Heart left ventricle (tissue), 16 donors: ENCODE measurements at regions of chr21 and their contacts with region 1.

Region 1: GRCh38 chr21:43810505-43811261 is 21.3 kb downstream of the RRP1 start:
- DNase-seq: peak; percentile 83 to 93 (median 86)
- ATAC-seq: peak; percentile 68 to 88 (median 84)
- H3K4me3 ChIP-seq: peak overlapping the region in 3 of 12 donors; percentile 3 to 52 (median 15)
- H3K27ac ChIP-seq: no peak overlapping the region
- H3K4me1 ChIP-seq: peaks cover 0 to 25% (median 8%) of the 10 kb centered on the region in 12 donors
- H3K27me3 ChIP-seq: no peaks in the 10 kb centered on the region
- CTCF ChIP-seq: peak; percentile 88 to 97 (median 92)
- POLR2A ChIP-seq: no peak

Region 2: DNA sequence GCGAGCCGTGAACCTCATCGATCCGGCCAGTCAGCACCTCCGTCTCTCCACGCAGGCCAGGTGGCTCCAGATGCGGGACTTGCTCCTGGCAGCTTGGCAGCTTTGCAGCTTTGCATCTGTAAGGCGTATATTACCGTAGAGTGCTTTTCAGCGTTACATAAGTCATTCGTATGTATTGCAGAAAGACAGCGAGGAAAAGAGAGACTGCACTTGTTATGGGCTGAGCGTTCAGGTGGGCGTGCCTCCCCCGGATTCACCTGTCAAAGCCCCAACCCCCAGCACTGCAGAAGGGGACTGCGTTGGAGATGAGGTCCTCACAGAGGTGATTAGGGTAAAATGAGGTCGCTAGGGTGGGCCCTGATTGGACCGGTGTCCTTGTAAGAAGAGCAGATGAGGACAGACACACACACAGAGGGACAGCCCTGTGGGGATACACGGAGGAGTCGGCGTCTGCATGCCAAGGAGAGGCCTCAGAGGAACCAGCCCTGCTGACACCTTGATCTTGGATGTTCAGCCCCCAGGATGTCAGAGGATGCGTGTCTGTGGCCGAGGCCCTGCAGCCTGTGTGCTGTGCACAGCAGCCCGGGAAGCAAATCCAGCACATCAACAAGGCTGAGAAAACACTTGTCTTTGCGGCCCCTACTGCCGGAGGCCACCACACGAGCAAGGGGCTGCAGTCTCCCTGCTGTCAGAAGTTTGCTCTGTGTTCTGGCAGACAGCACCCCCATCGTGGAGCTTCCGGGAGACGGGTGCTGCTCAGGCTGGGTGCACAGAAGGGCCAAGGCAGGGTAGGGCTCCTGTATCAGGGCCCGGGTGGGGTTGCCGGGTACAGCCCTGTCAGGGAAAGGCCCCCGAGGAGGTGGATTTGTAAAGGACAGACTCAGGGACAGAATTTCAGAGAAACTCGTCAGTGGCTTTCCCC is 43.4 kb after region 1 on chr21:
- intact Hi-C with region 1: no loop called
- DNase-seq: peak in 1 of 5 donors; percentile 15
- ATAC-seq: no peak
- H3K4me3 ChIP-seq: no peak overlapping the region
- H3K27ac ChIP-seq: no peak overlapping the region
- H3K4me1 ChIP-seq: peaks cover 0 to 5% (median 0%) of the 10 kb centered on the region in 12 donors
- H3K27me3 ChIP-seq: no peaks in the 10 kb centered on the region
- CTCF ChIP-seq: no peak
- POLR2A ChIP-seq: no peak

Region 3: DNA sequence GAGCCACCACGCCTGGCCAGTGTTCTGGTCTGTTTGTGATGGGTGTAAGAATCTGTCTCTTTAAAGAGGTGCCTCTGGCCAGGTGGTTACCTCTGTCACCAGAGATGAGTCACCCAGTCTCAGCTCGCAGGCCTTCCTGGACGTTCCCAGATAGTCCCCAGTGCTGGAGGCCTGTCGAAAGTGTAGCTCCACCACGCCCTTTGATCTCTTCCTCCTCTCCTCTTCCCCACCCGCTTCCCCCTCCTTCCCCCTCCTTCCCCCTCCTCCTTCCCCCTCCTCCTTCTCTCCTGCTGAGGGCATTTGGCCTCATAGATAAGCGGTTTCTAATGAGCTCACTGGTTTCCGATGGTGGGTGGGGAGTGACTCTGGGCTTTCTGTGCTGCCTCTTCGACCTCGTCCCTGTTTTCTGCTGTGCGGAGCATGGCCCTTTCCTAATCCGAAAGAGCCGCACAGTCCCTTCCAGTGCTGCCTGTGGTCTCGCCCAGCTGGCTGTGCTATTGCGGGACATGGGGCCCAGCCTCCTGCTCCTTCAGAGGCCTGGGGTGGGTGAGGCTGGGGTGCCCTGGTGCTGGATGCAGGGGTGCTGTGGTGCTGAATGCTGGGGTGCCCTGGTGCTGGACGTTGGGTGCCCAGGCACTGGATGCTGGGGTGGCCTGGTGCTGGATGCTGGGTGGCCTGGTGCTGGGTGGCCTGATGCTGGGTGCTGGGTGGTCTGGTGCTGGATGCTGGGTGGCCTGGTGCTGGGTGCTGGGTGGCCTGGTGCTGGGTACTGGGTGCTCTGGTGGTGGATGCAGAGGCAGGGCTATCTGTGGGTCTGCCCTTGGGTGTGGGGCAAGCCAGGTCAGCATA is 73.6 kb after region 1 on chr21:
- intact Hi-C with region 1: loop called in 1 of 10 experiments (anchors 10 kb)
- DNase-seq: peak in 1 of 5 donors; percentile 34
- ATAC-seq: peak; percentile 36 to 64 (median 54)
- H3K4me3 ChIP-seq: peak overlapping the region in 1 of 12 donors; percentile 10
- H3K27ac ChIP-seq: peak overlapping the region in 8 of 12 donors; percentile 13 to 69 (median 48)
- H3K4me1 ChIP-seq: peaks cover 0 to 57% (median 41%) of the 10 kb centered on the region in 12 donors
- H3K27me3 ChIP-seq: no peaks in the 10 kb centered on the region
- CTCF ChIP-seq: no peak
- POLR2A ChIP-seq: no peak

Region 4: DNA sequence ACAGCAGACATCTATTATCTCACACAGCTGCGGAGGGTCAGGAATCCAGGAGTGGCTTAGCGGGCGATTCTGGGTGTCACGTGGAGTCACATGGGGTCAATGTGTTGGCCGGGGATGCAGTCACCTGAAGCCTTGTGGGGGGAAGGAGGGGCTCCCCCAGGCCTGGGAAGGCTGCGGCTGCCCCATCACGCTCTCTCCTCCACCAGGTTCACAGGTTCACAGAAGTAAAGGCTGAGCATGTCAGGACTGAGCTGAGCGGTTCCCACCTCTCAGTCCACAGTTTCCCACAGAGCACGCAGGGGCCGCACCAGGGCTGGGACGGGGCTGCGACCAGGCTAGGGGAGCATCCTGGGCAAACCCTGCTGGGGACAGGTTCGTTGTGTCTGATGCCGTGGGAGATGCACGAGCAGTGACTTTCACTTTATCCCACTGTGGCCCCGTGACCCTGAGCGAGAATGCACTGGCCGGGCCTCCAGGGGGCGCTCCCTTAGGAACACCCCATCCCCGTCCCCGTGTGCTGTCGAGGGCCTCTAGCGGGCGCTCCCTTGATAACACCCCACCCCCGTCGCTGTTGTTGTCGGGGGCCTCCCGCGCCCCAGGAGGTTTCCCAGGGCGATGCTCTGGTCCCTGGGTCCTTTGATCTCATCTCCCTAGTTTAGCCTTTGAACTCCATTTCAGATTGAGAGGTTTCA is 128.2 kb after region 1 on chr21:
- intact Hi-C with region 1: loop called in 3 of 10 experiments (anchors 1 to 5 kb)
- DNase-seq: peak; percentile 79 to 91 (median 83)
- ATAC-seq: peak; percentile 72 to 91 (median 88)
- H3K4me3 ChIP-seq: peak overlapping the region in 10 of 12 donors; percentile 27 to 59 (median 44)
- H3K27ac ChIP-seq: peak overlapping the region in 7 of 12 donors; percentile 21 to 74 (median 55)
- H3K4me1 ChIP-seq: peaks cover 2 to 29% (median 19%) of the 10 kb centered on the region in 12 donors
- H3K27me3 ChIP-seq: no peaks in the 10 kb centered on the region
- CTCF ChIP-seq: peak; percentile 88 to 96 (median 94)
- POLR2A ChIP-seq: peak in 1 of 2 donors; percentile 31

Region 5: DNA sequence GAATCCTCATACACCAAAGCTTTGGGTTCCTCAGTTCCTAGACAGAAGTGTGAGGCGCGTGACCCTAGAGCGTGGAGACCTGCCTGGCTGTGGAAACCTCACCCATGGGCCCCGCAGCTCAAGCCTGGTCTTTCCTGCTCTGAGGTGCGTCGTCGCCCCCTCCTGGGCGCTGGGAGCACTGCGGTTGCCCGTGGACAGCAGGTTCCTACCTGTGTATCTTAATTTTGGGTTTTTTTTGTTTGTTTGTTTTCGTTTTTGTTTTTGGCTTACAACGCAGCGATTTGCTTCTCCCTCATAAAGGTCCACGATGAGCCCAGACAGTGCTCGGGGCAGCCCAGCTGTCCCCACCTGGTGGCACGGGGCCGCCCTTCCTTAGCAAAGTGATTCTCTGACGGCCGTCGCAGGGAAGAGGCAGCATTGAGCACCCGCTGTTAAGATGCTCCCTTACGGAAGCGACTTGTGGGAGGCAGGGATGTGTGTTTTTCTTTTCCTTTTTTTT is 164.9 kb after region 1 on chr21:
- intact Hi-C with region 1: loop called in 7 of 10 experiments (anchors 1 to 2 kb)
- DNase-seq: peak; percentile 62 to 87 (median 75)
- ATAC-seq: peak; percentile 38 to 80 (median 76)
- H3K4me3 ChIP-seq: no peak overlapping the region
- H3K27ac ChIP-seq: no peak overlapping the region
- H3K4me1 ChIP-seq: peaks cover 0 to 9% (median 3%) of the 10 kb centered on the region in 12 donors
- H3K27me3 ChIP-seq: no peaks in the 10 kb centered on the region
- CTCF ChIP-seq: peak; percentile 86 to 98 (median 91)
- POLR2A ChIP-seq: no peak

Region 6: GRCh38 chr21:44011980-44012527 is 201.4 kb after region 1 on chr21 and contains the start of gene TRAPPC10:
- intact Hi-C with region 1: no loop called
- DNase-seq: peak; percentile 88 to 93 (median 90)
- ATAC-seq: peak; percentile 73 to 95 (median 93)
- H3K4me3 ChIP-seq: peak within 1 kb of the TSS; percentile 72 to 99 (median 94)
- H3K27ac ChIP-seq: peak within 1 kb of the TSS; percentile 76 to 99 (median 97)
- H3K4me1 ChIP-seq: peaks cover 7 to 48% (median 25%) of the 10 kb centered on the region in 12 donors
- H3K27me3 ChIP-seq: no peaks in the 10 kb centered on the region
- CTCF ChIP-seq: no peak
- POLR2A ChIP-seq: peak; percentile 76 to 91
- total RNA-seq, gene TRAPPC10: 14.6 to 32.0 (median 22.5) TPM

Region 7: DNA sequence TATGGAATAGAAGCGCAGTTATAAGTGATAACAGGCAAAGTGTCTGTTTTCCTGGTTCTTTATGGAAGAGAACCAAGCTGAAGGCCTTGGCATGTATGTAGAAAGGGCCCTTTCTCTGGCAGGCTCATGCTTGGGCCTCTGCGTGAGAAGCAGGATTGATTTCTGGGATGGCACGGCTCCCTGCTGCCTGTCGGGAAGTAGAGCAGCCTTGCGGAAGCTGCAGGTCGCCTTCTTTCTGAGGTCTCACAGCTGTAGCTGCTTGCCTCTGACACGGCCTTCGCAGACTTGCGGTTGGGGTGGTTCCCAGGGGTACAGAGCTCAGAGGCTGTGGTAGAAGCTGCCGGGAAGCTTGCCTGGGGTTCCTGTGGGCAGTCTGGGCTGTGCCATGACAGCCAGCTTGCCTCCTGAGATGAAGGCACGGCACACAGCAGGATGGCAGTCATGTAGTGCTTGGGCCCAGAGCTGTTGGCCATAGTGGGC is 240.8 kb after region 1 on chr21:
- intact Hi-C with region 1: loop called in 1 of 10 experiments (anchors 10 kb)
- DNase-seq: peak; percentile 32 to 79 (median 70)
- ATAC-seq: peak; percentile 20 to 86 (median 74)
- H3K4me3 ChIP-seq: peak overlapping the region in 1 of 12 donors; percentile 5
- H3K27ac ChIP-seq: peak overlapping the region; percentile 12 to 85 (median 50)
- H3K4me1 ChIP-seq: peaks cover 0 to 42% (median 26%) of the 10 kb centered on the region in 12 donors
- H3K27me3 ChIP-seq: no peaks in the 10 kb centered on the region
- CTCF ChIP-seq: no peak
- POLR2A ChIP-seq: no peak